ENCODE measurements at regions of chr1 and their contacts with region 1.

Region 1: GRCh38 chr1:109548321-109549267 is at the start of gene GNAI3:
- DNase-seq: peak; percentile 72
- H3K4me3 ChIP-seq: peak within 1 kb of the TSS; percentile 95
- CTCF ChIP-seq: no peak

Region 2: DNA sequence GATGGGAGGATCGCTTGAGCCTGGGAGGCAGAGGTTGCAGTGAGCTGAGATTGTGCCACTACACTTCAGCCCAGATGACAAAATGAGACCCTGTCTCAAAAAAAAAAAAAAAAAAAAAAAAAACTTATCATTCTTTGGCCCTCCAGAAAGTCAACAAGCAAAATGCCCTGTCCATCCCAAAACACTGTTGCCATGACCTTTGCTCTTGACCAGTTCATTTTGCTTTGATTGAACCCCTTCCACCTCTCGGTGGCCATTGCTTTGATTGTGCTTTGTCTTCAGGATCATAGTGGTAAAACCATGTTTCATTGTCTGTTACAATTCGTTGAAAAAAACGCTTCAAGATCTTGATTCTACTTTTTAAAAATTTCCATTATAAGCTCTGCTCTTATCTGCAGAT is 90.8 kb before region 1 on chr1:
- CTCF ChIA-PET with region 1: no interaction called
- POLR2A ChIA-PET with region 1: no interaction called
- DNase-seq: no peak
- H3K4me3 ChIP-seq: no peak overlapping the region
- CTCF ChIP-seq: no peak

Region 3: GRCh38 chr1:109570417-109570827 is 21.8 kb after region 1 on chr1:
- CTCF ChIA-PET with region 1: interaction called, 15 read pairs
- POLR2A ChIA-PET with region 1: interaction called, 6 read pairs
- DNase-seq: no peak
- H3K4me3 ChIP-seq: no peak overlapping the region
- CTCF ChIP-seq: no peak

Region 4: DNA sequence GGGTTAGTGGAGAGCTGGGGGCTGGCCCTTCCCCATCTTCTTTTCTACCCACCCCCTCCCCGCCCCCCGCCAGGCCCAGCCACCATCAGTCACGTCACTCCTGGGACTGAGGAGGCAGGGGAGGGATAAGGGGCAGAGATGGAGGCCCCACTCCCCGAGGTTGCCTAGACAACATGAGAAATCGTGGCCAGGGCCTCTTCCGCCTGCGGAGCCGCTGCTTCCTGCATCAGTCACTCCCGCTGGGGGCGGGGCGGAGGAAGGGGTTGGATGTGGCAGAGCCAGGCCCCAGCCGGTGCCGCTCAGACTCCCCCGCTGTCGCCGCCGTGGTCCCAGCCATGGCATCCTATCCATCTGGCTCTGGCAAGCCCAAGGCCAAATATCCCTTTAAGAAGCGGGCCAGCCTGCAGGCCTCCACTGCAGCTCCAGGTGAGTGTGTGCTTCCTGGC is 72.3 kb after region 1 on chr1:
- CTCF ChIA-PET with region 1: interaction called, 12 read pairs
- POLR2A ChIA-PET with region 1: interaction called, 25 read pairs
- DNase-seq: peak; percentile 76
- H3K4me3 ChIP-seq: peak overlapping the region; percentile 90
- CTCF ChIP-seq: no peak

Region 5: GRCh38 chr1:109630081-109630897 is 81.7 kb after region 1 on chr1:
- CTCF ChIA-PET with region 1: interaction called, 381 read pairs
- POLR2A ChIA-PET with region 1: interaction called, 7 read pairs
- DNase-seq: no peak
- H3K4me3 ChIP-seq: no peak overlapping the region
- CTCF ChIP-seq: no peak

Region 6: DNA sequence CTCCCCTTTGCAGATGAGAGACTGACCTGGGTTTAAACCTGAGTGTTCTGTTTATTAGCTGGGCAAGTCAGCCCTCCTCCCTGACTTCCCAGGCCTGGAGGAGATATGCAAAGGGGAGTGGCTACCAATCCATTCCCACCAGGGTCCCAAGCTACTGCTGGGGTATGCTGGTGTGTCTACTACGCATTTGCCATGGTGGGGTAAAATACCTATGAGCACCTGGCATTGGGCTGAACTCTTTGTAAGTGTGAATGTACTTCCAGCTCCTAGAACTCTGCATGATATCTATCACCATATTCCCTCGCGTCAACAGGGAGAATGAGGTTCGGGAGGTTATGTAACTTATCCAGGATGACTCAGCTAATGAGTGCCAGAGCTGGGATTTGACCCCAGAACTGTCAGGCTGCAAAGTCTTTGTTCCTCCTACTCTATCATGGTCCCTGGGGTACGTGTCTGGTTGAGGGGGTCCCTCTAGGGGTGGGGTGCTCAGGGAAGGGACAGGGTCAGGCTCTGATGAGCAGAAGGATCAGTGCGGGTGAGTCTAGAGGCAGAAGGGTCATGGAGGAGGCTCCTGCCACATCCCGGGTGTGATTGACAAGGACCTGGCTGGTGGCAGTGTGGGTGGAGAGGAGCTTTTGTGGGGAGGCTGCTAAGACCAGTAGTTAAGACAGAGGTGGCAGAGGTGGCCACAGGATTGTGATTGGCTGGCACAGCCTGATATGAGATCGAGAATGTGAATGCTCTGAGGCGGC is 87.8 kb after region 1 on chr1:
- CTCF ChIA-PET with region 1: interaction called, 381 read pairs
- POLR2A ChIA-PET with region 1: interaction called, 11 read pairs
- DNase-seq: no peak
- H3K4me3 ChIP-seq: no peak overlapping the region
- CTCF ChIP-seq: no peak

Region 7: GRCh38 chr1:109649491-109649914 is 100.9 kb after region 1 on chr1:
- CTCF ChIA-PET with region 1: interaction called, 381 read pairs
- POLR2A ChIA-PET with region 1: no interaction called
- DNase-seq: no peak
- H3K4me3 ChIP-seq: no peak overlapping the region
- CTCF ChIP-seq: no peak

Region 8: GRCh38 chr1:109687616-109688499 is 139.3 kb after region 1 on chr1 and contains the start of gene GSTM1:
- CTCF ChIA-PET with region 1: no interaction called
- POLR2A ChIA-PET with region 1: no interaction called
- DNase-seq: no peak
- H3K4me3 ChIP-seq: no peak within 1 kb of the TSS
- CTCF ChIP-seq: no peak

Region 9: GRCh38 chr1:110011527-110012041 is 463.0 kb after region 1 on chr1:
- CTCF ChIA-PET with region 1: interaction called, 13 read pairs
- POLR2A ChIA-PET with region 1: no interaction called
- DNase-seq: no peak
- H3K4me3 ChIP-seq: no peak overlapping the region
- CTCF ChIP-seq: peak; percentile 61